ENCODE measurements at regions of chr7 and their contacts with region 1.

Region 1: GRCh38 chr7:73606801-73607691 is 17.3 kb downstream of the MLXIPL start:
- DNase-seq: peak; percentile 61
- H3K4me3 ChIP-seq: no peak overlapping the region
- H3K27ac ChIP-seq: no peak overlapping the region
- H3K4me1 ChIP-seq: no peaks in the 10 kb centered on the region
- H3K27me3 ChIP-seq: no peaks in the 10 kb centered on the region
- CTCF ChIP-seq: peak; percentile 94

Region 2: GRCh38 chr7:73509463-73509862 is 97.6 kb before region 1 on chr7:
- intact Hi-C with region 1: no loop called
- DNase-seq: no peak
- H3K4me3 ChIP-seq: no peak overlapping the region
- H3K27ac ChIP-seq: no peak overlapping the region
- H3K4me1 ChIP-seq: no peaks in the 10 kb centered on the region
- H3K27me3 ChIP-seq: no peaks in the 10 kb centered on the region
- CTCF ChIP-seq: no peak

Region 3: GRCh38 chr7:73667344-73668102 is 60.5 kb after region 1 on chr7 and contains the start of gene VPS37D:
- intact Hi-C with region 1: loop called (anchors 5 kb)
- DNase-seq: peak; percentile 94
- H3K4me3 ChIP-seq: peak within 1 kb of the TSS; percentile 31
- H3K27ac ChIP-seq: no peak within 1 kb of the TSS
- H3K4me1 ChIP-seq: no peaks in the 10 kb centered on the region
- H3K27me3 ChIP-seq: no peaks in the 10 kb centered on the region
- CTCF ChIP-seq: peak; percentile 51
- total RNA-seq, gene VPS37D: 0.62 to 2.0 TPM

Region 4: DNA sequence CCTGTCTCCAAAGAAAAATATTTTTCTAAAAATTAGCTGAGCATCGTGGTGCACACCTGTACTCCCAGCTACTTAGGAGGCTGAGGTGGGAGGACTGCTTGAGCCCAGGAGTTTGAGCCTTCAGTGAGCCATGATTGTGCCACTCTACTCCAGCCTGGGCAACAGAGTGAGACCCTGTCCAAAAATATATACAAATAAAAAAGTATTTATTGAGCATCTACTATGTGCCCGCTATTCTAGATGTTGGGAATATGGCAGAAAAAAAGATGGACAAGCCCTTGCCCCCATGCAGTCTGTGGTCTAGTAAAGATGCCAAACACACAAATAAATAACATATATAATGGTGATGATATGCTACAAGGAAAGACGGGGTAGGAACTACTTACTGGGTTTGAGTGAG is 116.8 kb after region 1 on chr7:
- intact Hi-C with region 1: loop called (anchors 2 kb)
- DNase-seq: no peak
- H3K4me3 ChIP-seq: no peak overlapping the region
- H3K27ac ChIP-seq: no peak overlapping the region
- H3K4me1 ChIP-seq: peaks cover 5% of the 10 kb centered on the region
- H3K27me3 ChIP-seq: no peaks in the 10 kb centered on the region
- CTCF ChIP-seq: no peak

Region 5: DNA sequence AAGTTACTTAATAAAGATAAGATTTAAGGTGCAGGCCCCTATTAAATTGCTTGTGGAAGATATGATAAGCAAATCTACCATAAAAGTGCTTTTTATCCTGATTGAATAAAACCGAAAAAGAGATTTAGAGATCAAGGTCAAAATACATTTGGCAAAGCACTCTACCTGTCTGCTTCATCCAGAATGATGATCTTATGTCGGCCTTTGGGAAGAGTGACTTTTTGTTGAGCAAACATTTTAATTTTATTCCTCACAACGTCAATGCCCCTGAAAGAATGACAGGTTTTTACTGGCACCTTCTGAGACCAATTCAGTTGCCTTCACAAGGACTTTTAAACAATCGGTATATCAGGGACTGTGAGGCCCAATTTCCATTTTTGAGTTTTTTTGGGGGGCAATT is 639.5 kb after region 1 on chr7:
- intact Hi-C with region 1: no loop called
- DNase-seq: no peak
- H3K4me3 ChIP-seq: no peak overlapping the region
- H3K27ac ChIP-seq: no peak overlapping the region
- H3K4me1 ChIP-seq: no peaks in the 10 kb centered on the region
- H3K27me3 ChIP-seq: no peaks in the 10 kb centered on the region
- CTCF ChIP-seq: no peak

Measured in colonic mucosa (tissue), 4 donors.